Activated CD8-positive, alpha-beta T cell treated with anti-CD3 and anti-CD28 coated beads for 36 hours (primary cell): ENCODE measurements at regions of chr19 and their contacts with region 1.

Region 1: DNA sequence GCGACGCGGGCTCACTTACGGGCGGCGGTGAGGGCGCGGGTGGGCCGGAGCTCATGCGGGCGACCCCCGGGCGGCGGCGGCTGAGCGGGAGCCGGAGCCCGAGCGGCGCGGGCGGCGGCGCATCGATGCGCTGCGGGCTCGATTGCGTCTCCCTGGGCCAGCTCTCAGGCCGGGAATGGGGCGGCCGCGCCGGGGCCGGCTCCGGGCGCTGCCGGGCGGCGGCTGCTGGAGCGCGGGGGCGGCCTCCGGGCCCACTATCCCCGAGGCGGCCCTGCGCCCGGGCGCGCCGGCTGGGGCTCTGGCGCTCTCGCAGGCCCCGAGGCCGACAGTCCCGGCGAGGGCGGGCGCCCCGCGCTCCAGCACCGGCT is 1.4 kb upstream of the TSHZ3 start:
- DNase-seq: peak; percentile 15
- ATAC-seq: peak; percentile 24
- H3K4me3 Mint-ChIP-seq: peak overlapping the region; percentile 70
- H3K27ac Mint-ChIP-seq: no peak overlapping the region
- H3K4me1 Mint-ChIP-seq: peaks cover 32% of the 10 kb centered on the region
- H3K27me3 Mint-ChIP-seq: peaks cover 66% of the 10 kb centered on the region
- CTCF ChIP-seq: no peak

Region 2: DNA sequence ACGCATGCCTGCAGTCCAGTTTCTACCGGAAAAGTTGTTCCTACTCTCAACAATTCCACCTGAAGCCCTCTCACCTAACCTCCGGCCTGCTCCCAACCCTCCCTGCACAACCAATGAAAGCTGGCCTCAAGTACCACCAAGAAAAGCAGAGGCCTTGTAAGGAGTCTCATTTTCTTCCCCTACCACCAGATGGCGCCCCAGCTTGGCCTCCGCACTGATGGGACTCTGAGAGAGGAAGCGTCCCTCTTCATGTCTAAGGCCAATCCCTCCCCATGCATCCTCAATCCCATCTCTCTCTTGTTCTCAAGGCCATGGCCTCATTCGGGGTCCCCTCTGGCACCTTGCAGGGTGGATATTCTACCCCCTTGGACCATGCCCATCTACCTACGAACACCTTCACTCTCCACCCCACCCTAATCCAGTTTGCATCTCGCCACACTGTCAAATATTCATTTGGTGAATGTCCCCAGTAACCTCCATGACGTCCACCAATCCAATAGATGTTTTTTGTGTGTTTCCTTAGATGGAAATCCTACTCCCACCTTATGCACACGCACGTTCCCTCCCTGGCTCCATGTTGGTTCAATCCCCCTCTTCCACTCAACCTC is 565.7 kb before region 1 on chr19:
- CTCF ChIA-PET with region 1: no interaction called
- POLR2A ChIA-PET with region 1: no interaction called
- intact Hi-C with region 1: loop called (anchors 10 kb)
- DNase-seq: peak; percentile 74
- ATAC-seq: peak; percentile 42
- H3K4me3 Mint-ChIP-seq: no peak overlapping the region
- H3K27ac Mint-ChIP-seq: no peak overlapping the region
- H3K4me1 Mint-ChIP-seq: no peaks in the 10 kb centered on the region
- H3K27me3 Mint-ChIP-seq: peaks cover 5% of the 10 kb centered on the region
- CTCF ChIP-seq: peak; percentile 38

Region 3: GRCh38 chr19:31214086-31214485 is 136.6 kb before region 1 on chr19:
- CTCF ChIA-PET with region 1: interaction called, 3 read pairs
- POLR2A ChIA-PET with region 1: interaction called, 3 read pairs
- intact Hi-C with region 1: loop called (anchors 10 kb)
- DNase-seq: peak; percentile 97
- ATAC-seq: peak; percentile 94
- H3K4me3 Mint-ChIP-seq: peak overlapping the region; percentile 64
- H3K27ac Mint-ChIP-seq: peak overlapping the region; percentile 98
- H3K4me1 Mint-ChIP-seq: peaks cover 22% of the 10 kb centered on the region
- H3K27me3 Mint-ChIP-seq: no peaks in the 10 kb centered on the region
- CTCF ChIP-seq: no peak

Region 4: DNA sequence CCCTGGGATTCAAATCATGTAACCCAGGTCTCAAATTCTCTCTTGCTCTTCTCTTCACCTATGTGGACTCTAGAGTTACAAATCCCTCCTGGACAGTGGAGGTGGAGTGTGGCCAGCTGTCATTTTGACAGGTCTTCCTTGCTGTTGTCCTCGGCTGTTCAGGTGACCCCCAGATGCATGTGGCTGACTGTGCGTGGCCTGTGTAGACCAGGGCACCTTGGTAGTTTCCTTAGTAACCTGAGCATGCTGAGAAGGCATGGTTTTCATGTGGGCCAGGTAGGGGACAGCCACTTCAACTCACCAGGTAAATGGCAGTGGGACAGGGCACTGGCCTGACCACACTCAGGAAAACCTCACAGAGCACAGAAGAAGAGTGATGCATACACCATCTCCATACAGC is 153.5 kb after region 1 on chr19:
- CTCF ChIA-PET with region 1: no interaction called
- POLR2A ChIA-PET with region 1: no interaction called
- intact Hi-C with region 1: no loop called
- DNase-seq: no peak
- ATAC-seq: no peak
- H3K4me3 Mint-ChIP-seq: no peak overlapping the region
- H3K27ac Mint-ChIP-seq: no peak overlapping the region
- H3K4me1 Mint-ChIP-seq: no peaks in the 10 kb centered on the region
- H3K27me3 Mint-ChIP-seq: peaks cover 4% of the 10 kb centered on the region
- CTCF ChIP-seq: no peak